HEK293 (cell line): ENCODE measurements at regions of chr14 and their contacts with region 1.

Region 1: DNA sequence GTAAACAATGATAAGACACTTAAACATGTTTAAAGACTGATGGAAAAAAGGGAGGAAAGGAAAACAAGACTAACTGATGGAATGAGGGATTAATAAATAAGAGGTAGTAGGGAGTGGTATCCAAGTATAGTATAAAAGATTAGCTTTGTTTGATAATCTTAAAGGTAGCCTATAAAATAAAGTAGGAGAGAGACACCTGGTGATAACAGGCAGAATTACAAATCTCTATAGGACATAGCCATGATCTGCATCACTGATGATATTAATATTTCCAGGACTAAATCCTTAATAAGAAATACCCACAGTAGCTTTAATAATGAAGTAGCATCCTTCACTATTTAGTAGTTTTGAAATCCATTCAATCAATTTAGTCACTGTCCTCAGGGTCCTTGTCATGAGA is 30.4 kb downstream of the DLGAP5 start:
- H3K4me3 ChIP-seq: no peak overlapping the region
- H3K27ac ChIP-seq: no peak overlapping the region
- H3K4me1 ChIP-seq: no peaks in the 10 kb centered on the region
- CTCF ChIP-seq: no peak

Region 2: GRCh38 chr14:55088356-55088755 is 72.6 kb before region 1 on chr14:
- CTCF ChIA-PET with region 1: interaction called, 43 read pairs
- POLR2A ChIA-PET with region 1: interaction called, 3 read pairs
- H3K4me3 ChIP-seq: no peak overlapping the region
- H3K27ac ChIP-seq: no peak overlapping the region
- H3K4me1 ChIP-seq: no peaks in the 10 kb centered on the region
- CTCF ChIP-seq: no peak

Region 3: GRCh38 chr14:55094321-55095157 is 66.5 kb before region 1 on chr14:
- CTCF ChIA-PET with region 1: interaction called, 43 read pairs
- POLR2A ChIA-PET with region 1: interaction called, 4 read pairs
- H3K4me3 ChIP-seq: no peak overlapping the region
- H3K27ac ChIP-seq: no peak overlapping the region
- H3K4me1 ChIP-seq: no peaks in the 10 kb centered on the region; the same call in 1 of the 2 replicates
- CTCF ChIP-seq: no peak

Region 4: DNA sequence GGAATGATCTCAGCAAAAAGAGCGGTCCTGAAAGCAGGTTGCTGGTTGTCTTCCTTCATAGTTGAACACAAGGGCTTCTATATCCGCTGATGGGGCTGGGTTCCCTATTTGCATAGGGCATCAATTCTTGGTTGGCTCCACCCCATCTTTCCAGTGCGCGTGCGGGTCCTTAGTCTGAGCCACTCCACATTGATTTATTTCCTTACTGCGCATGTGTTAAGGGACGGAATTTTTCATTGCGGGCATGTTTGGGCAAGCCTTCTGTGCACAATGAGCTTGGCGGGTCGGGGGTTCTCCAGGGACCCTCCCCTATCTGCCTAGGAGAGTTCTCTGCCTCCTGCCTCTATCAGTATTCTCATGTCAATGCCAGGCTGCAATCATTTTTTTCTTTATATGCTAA is 51.6 kb after region 1 on chr14:
- CTCF ChIA-PET with region 1: no interaction called
- POLR2A ChIA-PET with region 1: no interaction called
- H3K4me3 ChIP-seq: no peak overlapping the region
- H3K27ac ChIP-seq: no peak overlapping the region
- H3K4me1 ChIP-seq: no peaks in the 10 kb centered on the region
- CTCF ChIP-seq: no peak